ENCODE measurements at regions of chr12 and their contacts with region 1.

Region 1: GRCh38 chr12:130335517-130336392 is 1.9 kb upstream of the PIWIL1 start:
- DNase-seq: peak in 6 of 7 donors; percentile 38 to 74 (median 58)
- H3K4me3 ChIP-seq: no peak overlapping the region
- H3K27ac ChIP-seq: no peak overlapping the region
- H3K4me1 ChIP-seq: no peaks in the 10 kb centered on the region
- H3K27me3 ChIP-seq: peaks cover 11% of the 10 kb centered on the region
- CTCF ChIP-seq: peak; percentile 36 to 82 (median 77)
- POLR2A ChIP-seq: no peak

Region 2: DNA sequence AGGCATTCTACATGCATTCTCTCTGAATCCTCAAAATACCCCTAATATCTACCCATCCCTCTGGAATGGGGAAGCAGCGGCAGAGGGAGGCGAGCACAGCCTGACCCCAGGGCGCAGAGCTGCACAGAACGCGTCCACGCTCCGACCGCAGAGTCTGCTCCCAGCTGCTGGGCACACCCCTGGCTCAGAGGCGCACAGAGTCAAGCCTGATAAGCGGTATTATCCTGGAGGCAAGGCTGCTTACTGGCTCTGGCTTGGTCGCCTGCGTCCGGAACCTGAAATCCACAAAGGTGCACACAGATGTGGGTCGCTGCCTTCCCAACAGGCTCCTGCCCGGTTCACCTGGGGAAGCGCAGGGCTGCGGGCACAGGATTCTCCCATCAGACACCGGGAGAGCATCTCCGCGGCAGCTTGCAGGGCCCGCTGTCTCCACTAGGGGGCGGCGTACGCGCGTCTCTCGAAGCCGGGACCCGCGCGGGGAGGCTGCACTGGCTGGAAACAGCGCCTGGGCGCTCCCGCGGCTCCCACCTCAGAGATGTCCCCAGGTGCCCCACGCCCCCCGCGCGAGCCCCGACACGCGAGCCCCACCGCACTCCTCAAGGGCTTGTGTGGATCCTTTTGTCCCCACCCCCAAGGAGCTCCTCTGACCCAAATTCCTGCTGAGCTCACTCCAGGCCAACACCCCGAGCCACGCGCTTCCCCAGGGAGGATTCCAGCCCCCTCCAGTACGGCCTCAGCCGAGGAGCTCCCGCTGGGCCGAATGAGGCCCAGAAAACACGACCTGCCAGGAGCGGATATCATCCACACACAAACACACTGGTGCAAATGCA is 293.6 kb before region 1 on chr12:
- intact Hi-C with region 1: loop called in 1 of 2 experiments (anchors 5 kb)
- DNase-seq: peak in 6 of 7 donors; percentile 38 to 67 (median 50)
- H3K4me3 ChIP-seq: no peak overlapping the region
- H3K27ac ChIP-seq: no peak overlapping the region
- H3K4me1 ChIP-seq: no peaks in the 10 kb centered on the region
- H3K27me3 ChIP-seq: peaks cover 31% of the 10 kb centered on the region
- CTCF ChIP-seq: peak; percentile 48 to 89 (median 68)
- POLR2A ChIP-seq: no peak

Region 3: DNA sequence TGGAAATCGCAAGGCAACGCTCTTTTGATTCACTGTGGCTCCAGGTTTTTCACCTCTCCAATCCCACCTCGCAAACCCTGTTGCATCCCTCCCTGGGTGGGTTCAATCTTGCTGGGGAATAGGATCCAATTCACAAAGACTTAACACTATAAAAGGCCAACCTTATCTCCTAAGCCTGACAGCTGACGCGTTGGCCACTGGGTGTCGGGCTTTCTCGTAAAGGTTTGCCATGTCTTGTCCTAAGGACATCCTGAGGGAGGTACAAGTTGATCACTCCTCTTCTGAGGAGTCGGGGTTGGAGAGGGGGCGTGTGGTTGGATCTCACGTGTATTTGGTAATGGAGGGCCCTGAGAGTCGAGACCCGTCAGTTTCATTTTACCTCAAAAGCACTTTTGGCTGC is 286.1 kb before region 1 on chr12:
- intact Hi-C with region 1: loop called (anchors 2 to 5 kb)
- DNase-seq: no peak
- H3K4me3 ChIP-seq: no peak overlapping the region
- H3K27ac ChIP-seq: no peak overlapping the region
- H3K4me1 ChIP-seq: no peaks in the 10 kb centered on the region
- H3K27me3 ChIP-seq: peaks cover 6% of the 10 kb centered on the region
- CTCF ChIP-seq: no peak
- POLR2A ChIP-seq: no peak

Measured in adrenal gland (tissue), 19 donors.